AG04450 (cell line): ENCODE measurements at regions of chr17 and their contacts with region 1.

Region 1: DNA sequence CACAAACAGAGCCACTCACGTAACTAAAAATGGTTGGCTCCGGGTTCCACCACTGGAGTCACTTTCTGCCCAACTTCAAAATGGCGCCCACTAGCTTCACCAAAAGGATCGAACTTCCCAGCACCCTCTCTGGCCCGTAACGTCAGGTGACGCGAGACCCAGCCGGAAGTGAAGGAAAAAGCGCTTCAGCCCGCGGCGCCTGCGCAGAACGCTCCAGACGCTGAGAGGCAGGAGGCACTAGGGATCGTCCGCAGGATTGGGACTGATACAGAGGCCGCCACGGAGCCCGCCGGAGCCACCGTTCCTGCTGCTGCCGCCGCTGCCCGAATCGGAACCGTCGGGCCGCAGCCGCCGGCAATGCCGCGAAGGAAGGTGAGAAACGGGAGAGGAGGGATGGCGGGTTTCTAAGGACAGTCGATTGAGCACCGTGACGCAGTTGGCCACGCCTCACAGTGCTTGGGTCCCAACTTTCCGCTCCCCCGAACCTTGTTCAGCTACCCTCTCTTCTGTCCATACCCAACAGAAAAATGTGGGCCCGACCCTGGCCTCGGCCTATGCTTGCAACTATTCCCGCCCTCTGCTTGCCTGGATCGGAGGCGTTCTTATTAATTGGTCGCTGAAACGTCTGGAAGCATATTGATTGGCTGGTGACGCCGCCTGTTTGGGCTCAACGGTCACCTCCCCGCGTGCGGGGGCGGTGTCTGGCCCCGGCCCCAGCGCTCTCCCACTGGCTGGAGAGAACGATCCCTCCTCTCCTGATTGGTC is at the start of gene KAT7:
- DNase-seq: peak; percentile 98
- H3K4me3 ChIP-seq: peak within 1 kb of the TSS; percentile 99
- H3K27ac ChIP-seq: peak within 1 kb of the TSS; percentile 98
- H3K27me3 ChIP-seq: no peaks in the 10 kb centered on the region
- CTCF ChIP-seq: no peak
- polyA plus RNA-seq, gene KAT7: 26.5 and 27.0 TPM in 2 replicates

Region 2: GRCh38 chr17:49763735-49764558 is 24.7 kb before region 1 on chr17 and contains the start of gene FAM117A:
- CTCF ChIA-PET with region 1: no interaction called
- POLR2A ChIA-PET with region 1: interaction called, 10 read pairs
- DNase-seq: peak; percentile 89
- H3K4me3 ChIP-seq: peak within 1 kb of the TSS; percentile 74
- H3K27ac ChIP-seq: no peak within 1 kb of the TSS
- H3K27me3 ChIP-seq: peaks cover 47% of the 10 kb centered on the region
- CTCF ChIP-seq: no peak
- polyA plus RNA-seq, gene FAM117A: 2.5 and 2.8 TPM in 2 replicates